ENCODE measurements at regions of chr2 and their contacts with region 1.

Region 1: GRCh38 chr2:40554668-40555285 is 102.9 kb upstream of the SLC8A1 start:
- DNase-seq: no peak
- H3K4me3 ChIP-seq: no peak overlapping the region
- H3K27ac ChIP-seq: no peak overlapping the region
- H3K4me1 ChIP-seq: no peaks in the 10 kb centered on the region
- H3K27me3 ChIP-seq: no peaks in the 10 kb centered on the region
- CTCF ChIP-seq: peak; percentile 42 to 79 (median 74)
- POLR2A ChIP-seq: no peak

Region 2: GRCh38 chr2:39913648-39914461 is 640.9 kb before region 1 on chr2:
- intact Hi-C with region 1: loop called (anchors 10 kb)
- DNase-seq: no peak
- H3K4me3 ChIP-seq: no peak overlapping the region
- H3K27ac ChIP-seq: no peak overlapping the region
- H3K4me1 ChIP-seq: no peaks in the 10 kb centered on the region
- H3K27me3 ChIP-seq: no peaks in the 10 kb centered on the region
- CTCF ChIP-seq: peak; percentile 42 to 68 (median 65)
- POLR2A ChIP-seq: no peak

Region 3: GRCh38 chr2:40488101-40488601 is 66.6 kb before region 1 on chr2:
- intact Hi-C with region 1: no loop called
- DNase-seq: no peak
- H3K4me3 ChIP-seq: no peak overlapping the region
- H3K27ac ChIP-seq: no peak overlapping the region
- H3K4me1 ChIP-seq: peaks cover 13% of the 10 kb centered on the region
- H3K27me3 ChIP-seq: no peaks in the 10 kb centered on the region
- CTCF ChIP-seq: peak in 1 of 3 experiments; percentile 25
- POLR2A ChIP-seq: no peak

Region 4: GRCh38 chr2:41026613-41027012 is 471.8 kb after region 1 on chr2:
- intact Hi-C with region 1: no loop called
- DNase-seq: no peak
- H3K4me3 ChIP-seq: no peak overlapping the region
- H3K27ac ChIP-seq: no peak overlapping the region
- H3K4me1 ChIP-seq: no peaks in the 10 kb centered on the region
- H3K27me3 ChIP-seq: no peaks in the 10 kb centered on the region
- CTCF ChIP-seq: no peak
- POLR2A ChIP-seq: no peak

Measured in vagina (tissue), 2 donors.